ENCODE measurements at regions of chr15 and their contacts with region 1.

Region 1: DNA sequence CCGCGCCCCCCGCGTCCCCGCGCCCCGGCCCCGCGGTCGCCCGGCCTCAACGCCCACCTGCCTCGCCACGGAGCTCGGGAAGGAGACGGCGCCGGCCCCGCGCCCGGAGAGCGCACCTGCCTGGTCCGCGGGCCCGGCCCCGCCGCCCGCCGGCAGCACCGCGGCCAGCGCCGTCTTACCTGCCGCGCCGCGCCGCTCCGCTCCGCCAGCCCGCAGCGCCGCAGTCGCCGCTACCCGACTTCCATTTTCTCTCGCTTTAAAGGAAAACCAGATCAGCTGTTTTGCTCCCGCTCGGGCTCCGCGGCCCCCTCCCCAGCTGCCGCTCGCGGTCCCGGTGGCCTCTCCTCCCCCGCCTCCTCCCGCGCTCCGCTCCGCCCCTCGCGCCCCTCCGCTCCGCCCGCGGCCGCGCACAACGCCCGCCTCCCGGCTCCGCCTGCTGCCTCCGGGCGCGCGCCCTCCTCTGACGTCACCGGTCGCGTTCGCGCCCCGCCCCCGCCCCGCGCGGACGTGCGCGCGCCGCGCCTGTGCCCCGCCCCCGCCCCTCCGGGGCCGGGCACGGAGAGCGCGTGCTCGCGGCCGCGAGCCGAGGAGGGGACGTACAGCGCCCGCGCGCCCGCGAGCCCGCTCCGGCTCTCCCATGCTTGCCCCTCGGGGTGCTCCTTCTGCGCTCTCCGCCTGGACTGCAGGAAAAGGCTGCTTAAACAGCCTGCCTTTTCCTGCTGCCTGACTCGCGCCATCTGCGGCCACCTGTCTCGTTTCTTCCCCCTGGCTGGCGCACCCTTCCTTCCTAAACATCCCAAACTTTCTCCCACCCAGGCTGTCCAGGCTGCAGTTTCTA is 159.8 kb upstream of the CHRNA7 start:
- DNase-seq: peak; percentile 35 to 87
- H3K4me3 ChIP-seq: peak within 1 kb of the TSS; percentile 74 to 75
- H3K27ac ChIP-seq: peak within 1 kb of the TSS; percentile 63 to 64
- H3K4me1 ChIP-seq: peaks cover 0 to 3% of the 10 kb centered on the region in 2 donors
- H3K27me3 ChIP-seq: no peaks in the 10 kb centered on the region
- CTCF ChIP-seq: no peak

Region 2: GRCh38 chr15:30903497-30904201 is 966.9 kb before region 1 on chr15 and contains the start of gene FAN1:
- intact Hi-C with region 1: loop called (anchors 10 kb)
- DNase-seq: peak; percentile 34 to 92
- H3K4me3 ChIP-seq: peak within 1 kb of the TSS; percentile 90 to 99
- H3K27ac ChIP-seq: peak within 1 kb of the TSS; percentile 61 to 77
- H3K4me1 ChIP-seq: peaks cover 0 to 8% of the 10 kb centered on the region in 2 donors
- H3K27me3 ChIP-seq: no peaks in the 10 kb centered on the region
- CTCF ChIP-seq: no peak
- total RNA-seq, gene FAN1: 12.1 TPM

Region 3: DNA sequence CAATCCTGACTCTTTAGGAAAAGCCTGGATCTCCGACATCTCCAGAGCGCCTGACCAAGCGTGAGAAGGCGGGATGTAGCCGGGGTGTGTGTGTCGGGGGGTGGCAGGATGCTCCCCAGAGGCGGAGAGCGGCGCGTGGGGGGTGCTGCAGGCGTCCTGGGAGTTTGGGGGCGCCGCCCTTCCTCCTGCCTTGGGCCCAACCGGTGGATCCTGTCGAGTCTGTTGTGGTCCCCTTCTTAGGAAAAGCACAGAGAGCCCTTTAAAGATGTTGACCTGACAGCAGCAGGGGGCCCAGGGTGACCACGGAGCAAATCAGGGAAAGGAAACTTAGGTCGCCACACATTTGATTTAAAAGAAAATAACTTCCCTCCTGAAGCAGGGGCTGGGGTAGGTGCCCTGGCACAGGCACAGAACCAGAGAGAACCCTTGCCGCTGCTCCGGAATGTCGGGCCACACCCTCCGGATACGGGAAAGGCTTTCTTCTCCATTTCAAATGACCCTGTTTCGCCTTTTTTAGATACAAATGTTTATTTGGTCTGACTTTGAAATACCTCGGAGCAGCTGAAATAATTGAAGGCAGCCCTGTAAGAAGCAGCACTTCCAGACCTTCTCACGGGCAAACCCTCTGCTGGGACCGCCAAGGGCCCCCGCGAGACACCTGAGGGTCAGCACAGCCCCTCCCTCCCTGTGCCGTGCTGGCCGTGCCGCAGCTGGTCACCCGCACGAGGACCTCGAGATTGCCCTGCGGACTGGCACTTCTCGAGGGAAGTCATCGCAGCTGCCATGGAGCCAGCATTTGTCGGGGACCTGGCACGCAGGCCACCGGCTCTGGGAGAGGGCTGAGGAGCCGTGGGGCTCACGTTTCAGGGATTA is 646.8 kb before region 1 on chr15:
- intact Hi-C with region 1: loop called (anchors 5 kb)
- DNase-seq: no peak
- H3K4me3 ChIP-seq: peak overlapping the region; percentile 24 to 57
- H3K27ac ChIP-seq: no peak overlapping the region
- H3K4me1 ChIP-seq: peaks cover 0 to 6% of the 10 kb centered on the region in 2 donors
- H3K27me3 ChIP-seq: no peaks in the 10 kb centered on the region
- CTCF ChIP-seq: no peak

Region 4: GRCh38 chr15:31811641-31812040 is 58.9 kb before region 1 on chr15:
- intact Hi-C with region 1: no loop called
- DNase-seq: no peak
- H3K4me3 ChIP-seq: no peak overlapping the region
- H3K27ac ChIP-seq: no peak overlapping the region
- H3K4me1 ChIP-seq: no peaks in the 10 kb centered on the region
- H3K27me3 ChIP-seq: no peaks in the 10 kb centered on the region
- CTCF ChIP-seq: no peak

Region 5: DNA sequence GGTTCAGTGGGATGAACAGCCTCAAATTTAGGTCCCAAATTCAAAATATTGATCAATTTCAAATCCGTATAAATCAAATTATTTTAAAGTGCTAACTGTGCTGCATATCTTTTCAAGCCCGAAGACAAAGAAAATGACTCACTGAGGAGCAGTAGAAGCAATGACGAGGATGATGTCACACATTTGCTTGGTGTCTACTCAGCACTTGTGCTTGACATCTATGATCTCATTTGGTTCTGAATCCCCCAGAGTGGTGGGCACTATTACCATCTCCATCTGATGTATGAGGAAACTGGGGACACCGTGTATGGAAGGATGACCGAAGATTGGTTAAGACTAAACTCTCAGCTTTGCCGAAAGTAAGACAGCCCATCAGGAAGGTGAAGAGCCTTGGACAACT is 23.2 kb after region 1 on chr15:
- intact Hi-C with region 1: no loop called
- DNase-seq: no peak
- H3K4me3 ChIP-seq: no peak overlapping the region
- H3K27ac ChIP-seq: no peak overlapping the region
- H3K4me1 ChIP-seq: no peaks in the 10 kb centered on the region
- H3K27me3 ChIP-seq: no peaks in the 10 kb centered on the region
- CTCF ChIP-seq: no peak

Region 6: DNA sequence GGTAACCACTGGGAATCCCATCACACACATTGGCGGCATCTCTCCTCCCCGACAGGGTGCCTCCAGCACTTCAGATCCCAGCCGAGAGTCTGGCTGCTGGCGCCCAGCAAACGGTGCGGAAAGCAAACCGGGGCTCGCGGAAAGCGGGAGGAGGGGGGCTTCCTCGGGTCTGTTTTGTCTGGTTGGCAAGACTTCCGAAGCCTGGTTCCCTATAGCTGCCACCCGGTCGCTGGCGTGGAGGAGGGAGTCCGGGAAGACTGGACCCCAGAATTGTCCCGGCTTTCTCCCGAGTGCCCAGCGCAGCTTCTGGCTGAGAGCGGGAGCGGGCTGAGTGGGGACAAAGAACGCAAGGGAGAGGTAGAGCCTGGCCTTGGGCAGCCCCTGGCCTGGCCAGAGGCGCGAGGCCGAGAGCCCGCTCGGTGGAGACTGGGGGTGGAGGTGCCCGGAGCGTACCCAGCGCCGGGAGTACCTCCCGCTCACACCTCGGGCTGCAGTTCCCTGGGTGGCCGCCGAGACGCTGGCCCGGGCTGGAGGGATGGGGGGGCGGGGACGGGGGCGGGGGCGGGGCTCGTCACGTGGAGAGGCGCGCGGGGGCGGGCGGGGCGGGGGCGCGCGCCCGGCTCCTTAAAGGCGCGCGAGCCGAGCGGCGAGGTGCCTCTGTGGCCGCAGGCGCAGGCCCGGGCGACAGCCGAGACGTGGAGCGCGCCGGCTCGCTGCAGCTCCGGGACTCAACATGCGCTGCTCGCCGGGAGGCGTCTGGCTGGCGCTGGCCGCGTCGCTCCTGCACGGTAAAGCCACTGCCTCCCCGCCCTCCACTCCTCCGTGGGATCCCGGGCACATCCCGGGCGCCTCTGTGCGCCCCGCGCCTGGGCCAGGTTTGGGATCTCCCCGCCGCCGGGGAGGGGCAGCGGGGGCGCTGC is 159.6 kb after region 1 on chr15 and contains the start of gene CHRNA7:
- intact Hi-C with region 1: loop called (anchors 5 kb)
- DNase-seq: peak in 1 of 2 donors; percentile 72
- H3K4me3 ChIP-seq: peak within 1 kb of the TSS; percentile 56 to 67
- H3K27ac ChIP-seq: no peak within 1 kb of the TSS
- H3K4me1 ChIP-seq: peaks cover 0 to 7% of the 10 kb centered on the region in 2 donors
- H3K27me3 ChIP-seq: no peaks in the 10 kb centered on the region
- CTCF ChIP-seq: peak in 2 of 3 experiments; percentile 15 to 35
- total RNA-seq, gene CHRNA7: 2.6 TPM

Region 7: GRCh38 chr15:32099956-32100684 is 229.6 kb after region 1 on chr15:
- intact Hi-C with region 1: no loop called
- DNase-seq: no peak
- H3K4me3 ChIP-seq: no peak overlapping the region
- H3K27ac ChIP-seq: no peak overlapping the region
- H3K4me1 ChIP-seq: no peaks in the 10 kb centered on the region
- H3K27me3 ChIP-seq: no peaks in the 10 kb centered on the region
- CTCF ChIP-seq: no peak

Measured in ascending aorta (tissue), 2 donors.